ENCODE measurements at regions of chr7 and their contacts with region 1.

Region 1: GRCh38 chr7:26864309-26865093 is at the start of gene SKAP2:
- DNase-seq: peak; percentile 94
- ATAC-seq: peak; percentile 95
- H3K4me3 Mint-ChIP-seq: peak within 1 kb of the TSS; percentile 86
- H3K27ac Mint-ChIP-seq: peak within 1 kb of the TSS; percentile 83
- H3K4me1 Mint-ChIP-seq: peaks cover 17% of the 10 kb centered on the region
- H3K27me3 Mint-ChIP-seq: peaks cover 34% of the 10 kb centered on the region
- total RNA-seq, gene SKAP2: 7.8 to 10.4 TPM

Region 2: GRCh38 chr7:25862260-25863037 is 1002.1 kb before region 1 on chr7:
- CTCF ChIA-PET with region 1: no interaction called
- POLR2A ChIA-PET with region 1: no interaction called
- intact Hi-C with region 1: loop called (anchors 1 to 10 kb)
- DNase-seq: peak; percentile 99
- ATAC-seq: peak; percentile 94
- H3K4me3 Mint-ChIP-seq: peak overlapping the region; percentile 68
- H3K27ac Mint-ChIP-seq: peak overlapping the region; percentile 69
- H3K4me1 Mint-ChIP-seq: peaks cover 26% of the 10 kb centered on the region
- H3K27me3 Mint-ChIP-seq: peaks cover 46% of the 10 kb centered on the region

Region 3: GRCh38 chr7:26011039-26011696 is 853.3 kb before region 1 on chr7:
- CTCF ChIA-PET with region 1: no interaction called
- POLR2A ChIA-PET with region 1: no interaction called
- intact Hi-C with region 1: no loop called
- DNase-seq: no peak
- ATAC-seq: no peak
- H3K4me3 Mint-ChIP-seq: no peak overlapping the region
- H3K27ac Mint-ChIP-seq: no peak overlapping the region
- H3K4me1 Mint-ChIP-seq: no peaks in the 10 kb centered on the region
- H3K27me3 Mint-ChIP-seq: peaks cover 16% of the 10 kb centered on the region

Region 4: DNA sequence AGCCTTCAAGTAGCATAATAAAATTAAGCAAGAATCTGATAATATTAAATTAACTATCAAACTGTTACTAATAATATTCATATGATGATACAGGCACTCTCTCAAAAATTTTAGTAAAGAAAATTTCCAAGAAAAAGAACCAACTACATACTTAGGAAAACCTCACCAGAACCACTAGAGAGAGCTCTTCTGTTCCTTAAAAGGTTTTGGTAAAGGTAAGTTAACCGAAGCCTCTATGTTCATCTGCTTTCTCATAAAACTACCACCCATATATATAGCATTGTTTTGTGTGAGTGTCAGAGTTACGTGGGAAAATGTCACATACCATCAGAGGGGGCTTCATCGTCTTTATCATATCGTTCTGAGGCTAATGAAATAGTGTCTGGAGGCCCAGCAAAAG is 20.8 kb before region 1 on chr7:
- CTCF ChIA-PET with region 1: no interaction called
- POLR2A ChIA-PET with region 1: no interaction called
- intact Hi-C with region 1: no loop called
- DNase-seq: no peak
- ATAC-seq: no peak
- H3K4me3 Mint-ChIP-seq: no peak overlapping the region
- H3K27ac Mint-ChIP-seq: no peak overlapping the region
- H3K4me1 Mint-ChIP-seq: no peaks in the 10 kb centered on the region
- H3K27me3 Mint-ChIP-seq: peaks cover 3% of the 10 kb centered on the region

Region 5: DNA sequence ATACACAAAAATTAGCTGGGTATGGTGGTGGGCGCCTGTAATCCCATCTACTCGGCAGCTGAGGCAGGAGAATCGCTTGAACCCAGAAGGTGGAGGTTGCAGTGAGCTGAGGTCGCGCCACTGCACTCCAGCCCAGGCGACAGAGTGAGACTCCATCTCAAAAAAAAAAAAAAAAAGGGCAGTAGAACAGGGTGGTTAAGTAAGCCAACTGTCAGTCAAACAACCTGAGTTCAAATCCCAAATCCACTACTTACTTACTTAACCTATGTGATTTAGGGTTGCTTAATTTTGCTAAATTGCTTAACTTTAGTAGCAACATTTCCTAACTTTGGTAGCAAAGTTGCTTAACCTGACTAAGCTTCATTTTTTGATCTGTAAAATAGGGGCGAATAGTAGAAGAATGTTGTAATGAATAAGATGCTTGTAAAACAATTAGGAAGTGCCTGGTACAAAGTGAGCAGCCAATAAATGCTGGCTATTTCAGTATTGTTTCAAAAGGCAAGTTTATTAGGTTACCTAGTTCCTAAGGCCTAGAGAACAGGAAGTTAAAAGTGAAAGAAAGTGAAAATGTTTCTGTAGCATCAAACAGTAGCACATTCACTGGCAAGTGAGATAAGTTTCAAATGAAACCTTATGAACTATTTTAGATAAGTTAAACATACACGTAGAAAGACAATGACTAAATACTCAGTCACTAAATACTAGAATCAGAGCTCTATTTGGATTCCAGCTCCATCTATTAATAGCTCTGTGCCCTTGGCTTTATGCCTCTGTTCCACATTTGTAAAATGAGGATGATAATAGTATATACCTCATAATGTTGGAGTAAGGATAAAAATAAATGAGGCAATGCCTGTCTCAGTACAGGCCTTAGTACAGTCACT is 167.0 kb after region 1 on chr7:
- CTCF ChIA-PET with region 1: no interaction called
- POLR2A ChIA-PET with region 1: no interaction called
- intact Hi-C with region 1: loop called in 1 of 2 experiments (anchors 5 kb)
- DNase-seq: no peak
- ATAC-seq: peak; percentile 84
- H3K4me3 Mint-ChIP-seq: peak overlapping the region; percentile 22
- H3K27ac Mint-ChIP-seq: peak overlapping the region; percentile 80
- H3K4me1 Mint-ChIP-seq: peaks cover 24% of the 10 kb centered on the region
- H3K27me3 Mint-ChIP-seq: no peaks in the 10 kb centered on the region

Region 6: GRCh38 chr7:27130540-27131389 is 266.3 kb after region 1 on chr7 and contains the start of gene HOXA4:
- CTCF ChIA-PET with region 1: no interaction called
- POLR2A ChIA-PET with region 1: no interaction called
- intact Hi-C with region 1: loop called in 1 of 2 experiments (anchors 1 kb)
- DNase-seq: peak; percentile 83
- ATAC-seq: peak; percentile 87
- H3K4me3 Mint-ChIP-seq: peak within 1 kb of the TSS; percentile 56
- H3K27ac Mint-ChIP-seq: peak within 1 kb of the TSS; percentile 42
- H3K4me1 Mint-ChIP-seq: peaks cover 17% of the 10 kb centered on the region
- H3K27me3 Mint-ChIP-seq: peaks cover 38% of the 10 kb centered on the region
- total RNA-seq, gene HOXA4: 0.25 TPM in 1 of 2 experiments, not detected in the other

Region 7: GRCh38 chr7:27739909-27740448 is 875.5 kb after region 1 on chr7 and contains the start of gene TAX1BP1:
- CTCF ChIA-PET with region 1: no interaction called
- POLR2A ChIA-PET with region 1: no interaction called
- intact Hi-C with region 1: loop called in 1 of 2 experiments (anchors 1 kb)
- DNase-seq: peak; percentile 98
- ATAC-seq: peak; percentile 92
- H3K4me3 Mint-ChIP-seq: peak within 1 kb of the TSS; percentile 99
- H3K27ac Mint-ChIP-seq: peak within 1 kb of the TSS; percentile 99
- H3K4me1 Mint-ChIP-seq: peaks cover 34% of the 10 kb centered on the region
- H3K27me3 Mint-ChIP-seq: no peaks in the 10 kb centered on the region
- total RNA-seq, gene TAX1BP1: 101 to 109 TPM

Measured in activated CD4-positive, alpha-beta T cell treated with anti-CD3 and anti-CD28 coated beads for 36 hours (primary cell).